ENCODE measurements at regions of chr14 and their contacts with region 1.

Region 1: DNA sequence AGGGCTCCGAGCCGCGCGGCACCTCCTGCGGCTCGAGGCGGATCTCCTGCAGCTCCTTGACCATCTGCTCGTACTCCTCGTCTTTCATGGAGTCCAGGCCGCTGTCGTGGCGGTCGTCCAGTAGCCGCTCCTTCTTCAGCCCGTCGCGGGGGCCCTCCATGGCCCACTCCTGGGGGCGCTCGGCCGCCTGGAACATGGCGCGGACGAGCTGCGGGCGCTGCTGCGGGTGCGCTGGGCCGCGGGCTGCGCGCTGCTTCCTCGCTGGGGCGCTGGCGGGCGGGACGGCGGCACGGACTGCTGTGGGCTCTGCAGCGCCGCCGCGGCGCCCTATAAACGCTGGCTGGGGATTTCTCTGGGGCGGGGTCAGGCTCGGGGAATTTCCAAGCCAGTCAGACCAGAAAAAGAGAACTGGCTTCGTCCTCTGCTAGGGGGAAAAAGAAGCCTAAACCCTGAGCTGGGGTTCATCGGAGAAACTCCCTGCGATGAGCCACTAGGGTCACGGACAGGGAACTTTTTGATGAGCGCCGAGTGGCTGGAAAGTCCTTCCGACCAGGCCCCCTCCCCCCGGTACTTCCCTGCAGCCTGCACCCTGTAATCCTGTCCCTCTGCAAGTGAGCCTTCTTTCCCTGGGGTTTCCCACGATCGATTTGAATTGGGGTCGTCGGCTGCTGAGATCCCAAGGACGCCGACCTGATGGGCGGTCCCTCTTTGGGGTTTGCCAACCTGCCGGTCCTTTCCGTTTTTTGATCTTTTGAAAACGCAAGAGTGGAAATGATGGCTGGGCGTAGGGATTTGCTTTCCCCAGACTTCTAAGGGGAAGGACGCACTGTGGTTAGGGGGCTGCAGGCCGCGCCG is at the start of gene NFKBIA:
- DNase-seq: peak; percentile 93
- ATAC-seq: peak; percentile 78
- H3K4me3 ChIP-seq: peak within 1 kb of the TSS; percentile 88 to 99 (median 99)
- H3K27ac ChIP-seq: peak within 1 kb of the TSS; percentile 97
- H3K4me1 ChIP-seq: peaks cover 66% of the 10 kb centered on the region
- H3K27me3 ChIP-seq: no peaks in the 10 kb centered on the region; a peak in 2 of 5 replicates
- CTCF ChIP-seq: peak; percentile 75
- EP300 ChIP-seq: peak in 1 of 2 experiments; percentile 54; a peak in 3 of 4 replicates
- POLR2A ChIP-seq: peak in 1 of 2 experiments; percentile 97; a peak in 2 of 4 replicates
- RAD21 ChIP-seq: peak; percentile 96
- total RNA-seq, gene NFKBIA: 232 and 319 TPM in 2 replicates

Region 2: DNA sequence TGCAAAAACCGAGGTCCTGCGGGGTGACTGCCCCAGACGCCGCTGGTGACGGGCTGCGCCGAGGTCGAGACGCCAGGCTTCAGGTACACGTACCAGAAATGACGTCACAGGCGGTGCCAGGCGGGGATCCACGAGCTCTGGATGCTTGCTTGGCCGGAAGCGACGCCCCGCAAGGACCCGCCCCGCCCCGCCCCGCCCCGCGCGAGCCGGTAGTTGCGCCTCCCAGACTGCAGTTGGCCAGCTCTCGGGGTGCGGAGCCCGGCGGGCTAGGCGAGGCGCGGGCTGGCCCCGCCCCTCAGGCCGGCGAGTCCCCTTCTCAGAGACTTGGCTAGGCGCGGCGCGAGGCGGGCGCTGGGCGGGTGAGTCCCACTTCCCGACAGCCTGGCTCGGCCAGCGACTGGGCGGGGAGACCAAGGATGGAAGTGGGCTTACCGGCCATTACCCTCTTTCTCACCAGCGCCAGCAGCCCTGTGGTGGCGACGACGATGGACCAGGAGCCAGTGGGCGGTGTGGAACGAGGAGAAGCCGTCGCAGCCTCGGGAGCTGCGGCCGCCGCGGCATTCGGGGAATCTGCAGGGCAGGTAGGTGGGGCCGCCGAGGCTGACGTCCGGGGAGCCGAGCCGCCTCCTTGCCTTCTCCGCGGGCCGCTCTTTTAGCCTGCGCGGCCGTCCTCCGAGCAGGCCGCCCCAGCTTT is 358.5 kb before region 1 on chr14 and contains the start of gene FAM177A1:
- CTCF ChIA-PET with region 1: no interaction called
- POLR2A ChIA-PET with region 1: interaction called, 28 read pairs
- in situ Hi-C with region 1: no loop called
- intact Hi-C with region 1: loop called (anchors 5 kb)
- DNase-seq: peak; percentile 99
- ATAC-seq: peak; percentile 97
- H3K4me3 ChIP-seq: peak within 1 kb of the TSS; percentile 81 to 96 (median 90)
- H3K27ac ChIP-seq: peak within 1 kb of the TSS; percentile 82
- H3K4me1 ChIP-seq: peaks cover 52% of the 10 kb centered on the region
- H3K27me3 ChIP-seq: no peaks in the 10 kb centered on the region; a peak in 1 of 5 replicates
- CTCF ChIP-seq: peak; percentile 48
- EP300 ChIP-seq: peak in 1 of 2 experiments; percentile 44; a peak in 2 of 4 replicates
- POLR2A ChIP-seq: peak; percentile 93 to 96
- RAD21 ChIP-seq: peak; percentile 72
- total RNA-seq, gene FAM177A1: 116 and 119 TPM in 2 replicates

Region 3: DNA sequence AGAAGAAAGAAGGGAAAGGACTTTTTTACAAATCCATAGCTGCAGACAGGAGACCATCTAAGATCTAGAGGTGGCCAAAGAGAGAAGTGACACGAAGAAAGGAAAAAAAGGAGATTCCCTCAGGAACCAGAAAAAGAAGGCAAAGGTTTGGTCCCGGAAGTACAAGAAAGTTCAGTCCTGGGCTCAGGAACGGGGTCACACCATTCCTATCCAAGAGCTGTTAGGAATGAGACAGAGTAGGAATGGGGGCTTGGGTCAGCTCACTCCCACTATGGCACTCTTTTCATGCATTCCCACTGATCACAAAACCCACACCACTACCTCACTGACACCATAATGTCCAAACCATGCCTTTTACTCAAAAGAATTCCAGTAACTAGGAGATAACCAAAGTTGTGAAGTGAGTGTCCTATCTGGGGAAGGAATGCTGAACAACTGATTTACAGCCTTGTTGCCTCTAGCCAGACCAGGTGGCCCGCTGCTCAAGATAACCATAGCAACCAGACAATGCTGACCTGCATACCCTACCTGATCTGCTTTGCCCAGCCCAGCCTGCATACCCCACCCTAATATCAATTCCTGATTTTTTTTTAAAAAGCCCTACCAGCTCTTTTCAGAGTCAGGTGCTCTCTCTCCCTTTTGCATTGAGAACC is 291.2 kb before region 1 on chr14:
- CTCF ChIA-PET with region 1: no interaction called
- POLR2A ChIA-PET with region 1: no interaction called
- in situ Hi-C with region 1: no loop called
- intact Hi-C with region 1: no loop called
- DNase-seq: no peak
- ATAC-seq: no peak; the same call in 2 of the 3 replicates
- H3K4me3 ChIP-seq: no peak overlapping the region
- H3K27ac ChIP-seq: no peak overlapping the region
- H3K4me1 ChIP-seq: peaks cover 17% of the 10 kb centered on the region
- H3K27me3 ChIP-seq: no peaks in the 10 kb centered on the region
- CTCF ChIP-seq: no peak
- EP300 ChIP-seq: no peak
- POLR2A ChIP-seq: no peak
- RAD21 ChIP-seq: no peak

Region 4: DNA sequence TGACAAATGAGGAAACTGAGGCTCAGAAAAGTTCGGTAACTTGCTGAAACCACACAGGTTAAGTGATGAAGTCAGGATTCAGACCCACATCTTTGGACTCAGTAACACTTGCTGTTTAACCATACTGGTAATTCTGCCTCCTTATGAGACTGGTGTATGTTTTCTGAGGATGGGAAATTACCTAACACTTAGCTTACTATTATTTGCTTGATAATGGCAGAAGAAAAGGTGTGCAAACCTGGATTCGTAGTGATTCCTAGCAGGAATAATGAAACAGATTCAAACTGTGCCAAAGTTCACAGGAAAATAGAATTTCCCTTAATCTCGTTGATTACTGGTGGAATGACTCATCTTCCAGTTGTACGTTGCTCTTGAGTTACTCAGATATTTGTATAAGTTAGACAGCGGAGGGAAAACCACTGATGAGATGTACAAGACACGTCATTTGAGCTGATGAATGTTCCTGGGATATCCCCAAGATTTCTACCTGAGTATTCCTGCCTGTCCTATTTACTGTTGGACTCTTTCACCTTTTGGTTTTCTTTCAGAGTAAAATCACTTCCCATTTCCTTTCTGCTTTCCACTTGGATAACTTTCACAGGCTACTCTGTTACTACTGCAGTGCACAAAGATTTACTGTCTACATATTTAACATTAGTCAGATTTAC is 244.8 kb before region 1 on chr14:
- CTCF ChIA-PET with region 1: no interaction called
- POLR2A ChIA-PET with region 1: interaction called, 22 read pairs
- in situ Hi-C with region 1: no loop called
- intact Hi-C with region 1: no loop called
- DNase-seq: peak; percentile 94
- ATAC-seq: peak; percentile 90
- H3K4me3 ChIP-seq: peak overlapping the region in 1 of 3 experiments; percentile 4; a peak in 1 of 6 replicates
- H3K27ac ChIP-seq: peak overlapping the region; percentile 20
- H3K4me1 ChIP-seq: peaks cover 26% of the 10 kb centered on the region
- H3K27me3 ChIP-seq: no peaks in the 10 kb centered on the region
- CTCF ChIP-seq: no peak
- EP300 ChIP-seq: peak in 1 of 2 experiments; percentile 74; a peak in 2 of 4 replicates
- POLR2A ChIP-seq: no peak
- RAD21 ChIP-seq: no peak

Region 5: DNA sequence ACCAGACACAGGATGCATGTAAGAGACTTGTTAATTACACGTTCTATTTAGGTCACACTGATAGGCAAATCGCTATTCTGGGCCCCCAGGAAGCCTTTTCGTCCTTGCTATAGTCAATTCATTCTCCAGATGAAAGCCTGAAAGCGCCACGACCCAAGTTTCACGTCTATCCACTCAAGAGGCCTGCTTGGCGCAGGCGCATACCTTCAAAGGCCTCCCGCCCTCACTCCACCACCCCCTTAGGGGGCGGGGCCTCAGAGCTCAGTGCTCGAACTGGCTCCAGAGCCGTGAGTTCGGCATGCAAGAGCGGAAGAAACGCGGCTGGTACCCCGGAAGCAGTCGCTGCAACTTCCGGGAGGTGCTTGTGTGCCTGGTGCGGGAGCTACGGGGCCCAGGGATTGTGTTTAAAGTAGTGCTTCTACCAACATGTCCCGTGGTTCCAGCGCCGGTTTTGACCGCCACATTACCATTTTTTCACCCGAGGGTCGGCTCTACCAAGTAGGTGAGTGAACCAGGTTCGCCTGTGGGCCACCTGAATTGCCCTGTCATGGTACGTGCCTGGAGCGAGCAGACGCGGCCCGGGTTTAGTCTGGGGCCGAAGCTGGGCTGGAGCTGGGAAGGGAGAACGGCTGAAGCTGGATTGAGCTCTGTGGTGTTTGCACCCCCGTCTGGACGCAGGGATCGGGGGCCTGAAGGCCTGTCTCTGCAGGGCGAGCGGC is 112.5 kb before region 1 on chr14 and contains the start of gene PSMA6:
- CTCF ChIA-PET with region 1: interaction called, 3 read pairs
- POLR2A ChIA-PET with region 1: interaction called, 287 read pairs
- in situ Hi-C with region 1: loop called (anchors 5 kb)
- intact Hi-C with region 1: loop called (anchors 1 kb)
- DNase-seq: peak; percentile 100
- ATAC-seq: peak; percentile 92
- H3K4me3 ChIP-seq: peak within 1 kb of the TSS; percentile 78 to 90 (median 86)
- H3K27ac ChIP-seq: peak within 1 kb of the TSS; percentile 96
- H3K4me1 ChIP-seq: peaks cover 54% of the 10 kb centered on the region
- H3K27me3 ChIP-seq: no peaks in the 10 kb centered on the region; a peak in 2 of 5 replicates
- CTCF ChIP-seq: peak; percentile 25; the same call in 1 of the 2 replicates
- EP300 ChIP-seq: peak; percentile 72 to 77; a peak in 3 of 4 replicates
- POLR2A ChIP-seq: peak; percentile 94 to 98
- RAD21 ChIP-seq: peak; percentile 54
- total RNA-seq, gene PSMA6: 1,109 and 1,579 TPM in 2 replicates

Region 6: DNA sequence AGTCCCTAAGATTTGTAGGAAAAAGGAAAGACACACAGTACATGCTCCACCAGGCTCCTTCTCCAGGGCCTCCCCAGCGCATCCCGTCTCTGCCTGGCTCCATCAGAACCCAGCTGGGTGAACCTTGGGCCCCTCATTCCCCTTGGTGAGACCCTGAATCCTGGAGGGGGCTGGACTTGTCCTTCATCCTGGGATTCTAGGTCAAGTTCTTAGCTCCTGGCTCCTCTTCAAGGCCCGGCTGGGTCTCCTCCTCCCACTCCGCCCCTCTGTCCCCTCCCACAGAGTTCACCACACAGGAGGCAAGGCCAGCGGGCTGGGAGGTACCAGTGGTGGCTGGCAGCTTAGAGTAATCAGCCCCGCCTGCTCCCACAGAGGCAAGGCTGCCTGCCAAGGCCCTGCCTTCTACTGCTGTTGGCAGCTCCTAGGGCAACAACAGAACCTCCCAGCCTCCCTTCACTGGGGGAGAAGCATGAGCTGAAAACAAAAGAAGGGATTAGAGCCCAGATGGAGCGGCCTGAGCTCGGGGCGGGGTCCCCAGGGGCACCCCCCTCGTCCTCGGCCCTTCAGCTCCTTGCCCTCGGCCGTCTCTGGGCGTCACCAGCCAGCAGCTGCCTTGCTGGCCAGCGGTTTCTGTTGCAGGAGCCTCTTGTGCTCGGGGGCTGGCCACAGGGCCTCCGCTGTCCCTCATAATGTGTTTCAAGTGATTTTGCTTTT is 63.1 kb before region 1 on chr14:
- CTCF ChIA-PET with region 1: interaction called, 4 read pairs
- POLR2A ChIA-PET with region 1: interaction called, 473 read pairs
- in situ Hi-C with region 1: no loop called
- intact Hi-C with region 1: loop called (anchors 1 kb)
- DNase-seq: peak; percentile 91
- ATAC-seq: peak; percentile 85
- H3K4me3 ChIP-seq: peak overlapping the region; percentile 63 to 78 (median 64)
- H3K27ac ChIP-seq: no peak overlapping the region
- H3K4me1 ChIP-seq: peaks cover 90% of the 10 kb centered on the region
- H3K27me3 ChIP-seq: peaks cover 0 to 3% of the 10 kb centered on the region in 2 experiments; a peak in 2 of 5 replicates
- CTCF ChIP-seq: no peak; the same call in 1 of the 2 replicates
- EP300 ChIP-seq: no peak; a peak in 1 of 4 replicates
- POLR2A ChIP-seq: peak in 1 of 2 experiments; percentile 62; a peak in 2 of 4 replicates
- RAD21 ChIP-seq: 0 out of 2 replicates have a peak, but pooled peaks have one; percentile 31

Region 7: DNA sequence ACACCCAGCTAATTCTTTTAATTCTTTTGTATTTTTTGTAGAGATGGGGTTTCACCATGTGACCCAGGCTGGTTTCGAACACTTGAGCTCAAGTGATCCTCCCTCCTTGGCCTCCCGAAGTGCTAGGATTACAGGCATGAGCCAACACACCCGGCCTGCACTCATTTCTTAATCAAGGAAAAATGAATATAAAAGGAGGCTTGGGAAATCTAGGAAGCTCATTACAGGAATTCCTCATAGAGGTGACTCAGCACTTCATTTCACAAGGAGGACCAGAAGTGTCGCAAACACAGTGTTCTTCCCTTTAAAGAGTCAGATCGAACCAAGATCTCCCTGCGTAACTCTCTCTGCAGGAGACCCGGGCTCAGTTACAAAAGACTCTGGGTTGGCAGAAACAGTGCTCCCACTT is 30.4 kb before region 1 on chr14:
- CTCF ChIA-PET with region 1: no interaction called
- POLR2A ChIA-PET with region 1: interaction called, 83 read pairs
- in situ Hi-C with region 1: no loop called
- intact Hi-C with region 1: loop called (anchors 5 kb)
- DNase-seq: peak; percentile 89
- ATAC-seq: peak; percentile 6; the same call in 2 of the 3 replicates
- H3K4me3 ChIP-seq: no peak overlapping the region
- H3K27ac ChIP-seq: no peak overlapping the region
- H3K4me1 ChIP-seq: peaks cover 48% of the 10 kb centered on the region
- H3K27me3 ChIP-seq: no peaks in the 10 kb centered on the region
- CTCF ChIP-seq: no peak
- EP300 ChIP-seq: peak; percentile 63 to 91
- POLR2A ChIP-seq: no peak
- RAD21 ChIP-seq: no peak